ENCODE measurements at regions of chr14 and their contacts with region 1.

Region 1: GRCh38 chr14:22400655-22401259 is 188.3 kb downstream of the DAD1 start:
- DNase-seq: no peak
- ATAC-seq: no peak
- H3K4me3 ChIP-seq: no peak overlapping the region
- H3K27ac ChIP-seq: no peak overlapping the region
- H3K4me1 ChIP-seq: no peaks in the 10 kb centered on the region
- H3K27me3 ChIP-seq: no peaks in the 10 kb centered on the region

Region 2: GRCh38 chr14:22802860-22803686 is 402.3 kb after region 1 on chr14:
- intact Hi-C with region 1: loop called in 1 of 4 experiments (anchors 10 kb)
- DNase-seq: no peak
- ATAC-seq: no peak
- H3K4me3 ChIP-seq: no peak overlapping the region
- H3K27ac ChIP-seq: no peak overlapping the region
- H3K4me1 ChIP-seq: no peaks in the 10 kb centered on the region
- H3K27me3 ChIP-seq: no peaks in the 10 kb centered on the region